Right ventricle myocardium superior (tissue), 1 donor: ENCODE measurements at regions of chr7 and their contacts with region 1.

Region 1: GRCh38 chr7:90720984-90721760 is 125.1 kb downstream of the CDK14 start:
- DNase-seq: no peak
- ATAC-seq: peak; percentile 65

Region 2: GRCh38 chr7:90520484-90520883 is 200.7 kb before region 1 on chr7:
- intact Hi-C with region 1: no loop called
- DNase-seq: no peak
- ATAC-seq: no peak

Region 3: GRCh38 chr7:90595801-90596671 is 125.1 kb before region 1 on chr7 and contains the start of gene CDK14:
- intact Hi-C with region 1: loop called (anchors 10 kb)
- DNase-seq: peak; percentile 91
- ATAC-seq: peak; percentile 84
- total RNA-seq, gene CDK14: 24.2 TPM